ENCODE measurements at regions of chr11 and their contacts with region 1.

Region 1: GRCh38 chr11:128831174-128832120 is 35.6 kb downstream of the KCNJ1 start:
- DNase-seq: peak; percentile 91
- ATAC-seq: peak; percentile 94
- H3K4me3 ChIP-seq: peak overlapping the region; percentile 50; the same call in 1 of the 2 replicates
- H3K27ac ChIP-seq: no peak overlapping the region
- H3K4me1 ChIP-seq: peaks cover 18% of the 10 kb centered on the region; the same call in 1 of the 2 replicates
- H3K27me3 ChIP-seq: no peaks in the 10 kb centered on the region
- CTCF ChIP-seq: peak; percentile 97

Region 2: DNA sequence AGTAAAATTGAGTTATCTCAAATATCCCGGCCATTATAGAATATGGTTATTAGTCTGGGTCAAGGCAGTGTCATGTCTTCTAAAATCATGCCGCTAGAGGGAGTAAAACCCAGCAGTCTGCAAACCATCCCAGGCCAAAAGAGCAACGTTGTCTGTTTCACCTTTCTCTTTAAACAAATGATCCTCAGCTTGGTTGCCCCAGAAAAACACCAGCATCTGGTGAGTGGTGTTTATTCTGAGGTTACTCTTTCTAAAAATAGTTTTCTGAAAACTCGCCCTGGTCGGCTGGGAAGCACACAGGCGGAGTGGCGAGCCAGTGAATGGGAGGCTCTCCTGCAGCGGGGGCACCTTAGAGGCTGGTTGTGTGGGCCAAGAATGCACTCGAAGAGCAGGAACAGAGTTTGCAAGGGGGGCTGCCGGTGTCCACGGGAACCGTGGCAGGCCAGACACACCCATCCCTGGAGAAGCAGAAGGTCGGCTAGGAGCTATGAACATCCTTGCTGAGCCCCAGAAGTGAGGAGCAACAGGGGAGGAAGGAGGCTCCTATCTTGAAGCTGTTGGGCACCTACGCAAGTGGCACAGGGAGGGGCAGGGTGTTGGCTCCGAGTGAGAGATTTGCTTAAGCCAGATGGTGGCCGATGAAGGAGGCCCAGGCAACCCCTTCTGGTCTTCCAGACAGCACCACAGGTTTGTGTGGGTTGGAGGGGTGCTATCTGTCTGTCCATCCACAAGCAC is 541.2 kb before region 1 on chr11:
- CTCF ChIA-PET with region 1: no interaction called
- POLR2A ChIA-PET with region 1: no interaction called
- intact Hi-C with region 1: loop called (anchors 5 kb)
- DNase-seq: peak; percentile 94
- ATAC-seq: peak; percentile 82
- H3K4me3 ChIP-seq: no peak overlapping the region
- H3K27ac ChIP-seq: peak overlapping the region; percentile 53
- H3K4me1 ChIP-seq: peaks cover 39% of the 10 kb centered on the region
- H3K27me3 ChIP-seq: no peaks in the 10 kb centered on the region
- CTCF ChIP-seq: peak; percentile 97

Region 3: GRCh38 chr11:128928400-128928799 is 97.0 kb after region 1 on chr11:
- CTCF ChIA-PET with region 1: no interaction called
- POLR2A ChIA-PET with region 1: no interaction called
- intact Hi-C with region 1: no loop called
- DNase-seq: no peak
- ATAC-seq: no peak
- H3K4me3 ChIP-seq: no peak overlapping the region
- H3K27ac ChIP-seq: no peak overlapping the region
- H3K4me1 ChIP-seq: 0 out of 2 replicates have a peak, but pooled peaks cover 6% of the 10 kb centered on the region
- H3K27me3 ChIP-seq: no peaks in the 10 kb centered on the region
- CTCF ChIP-seq: no peak